ENCODE measurements at regions of chr19 and their contacts with region 1.

Region 1: DNA sequence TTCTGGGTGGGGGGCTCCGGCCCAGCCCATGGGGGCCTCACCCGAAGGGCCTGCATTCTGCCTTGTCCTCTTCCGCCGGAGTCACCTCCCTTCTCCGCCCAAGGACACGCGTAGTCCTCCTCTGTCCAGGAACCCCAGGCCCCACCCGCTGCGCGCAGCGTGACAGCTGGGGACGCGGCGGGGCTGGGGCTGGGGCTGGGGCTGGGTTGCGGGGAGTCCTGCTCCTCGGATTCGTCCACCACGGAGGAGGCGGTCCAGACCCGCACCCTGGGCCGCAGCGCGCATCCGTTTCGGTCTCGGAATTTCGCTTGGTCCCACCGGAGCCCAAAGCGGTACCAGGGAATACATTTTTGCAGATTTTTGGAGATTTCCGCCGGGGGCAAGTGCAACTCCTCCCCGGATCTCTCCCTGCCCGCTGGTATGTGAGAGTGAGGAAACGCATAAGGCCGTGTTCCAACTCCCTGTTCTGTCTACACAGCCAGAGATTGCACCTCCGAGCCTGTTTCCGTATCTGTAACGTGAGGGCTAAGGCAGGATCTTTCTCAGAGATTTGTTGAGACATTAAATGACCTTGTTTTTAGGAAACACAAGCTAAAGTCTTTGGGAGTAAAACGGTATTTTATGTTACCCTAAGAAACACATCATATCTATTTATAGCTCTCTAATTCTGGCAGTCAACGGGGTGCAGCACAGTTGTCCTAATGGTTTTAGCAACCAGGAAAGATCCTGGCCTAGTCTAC is at the start of gene COX7A1:
- DNase-seq: no peak
- H3K4me3 ChIP-seq: peak within 1 kb of the TSS; percentile 21 to 47 (median 38); a peak in 7 of 8 replicates
- H3K27ac ChIP-seq: no peak within 1 kb of the TSS
- H3K4me1 ChIP-seq: peaks cover 0 to 5% (median 0%) of the 10 kb centered on the region in 4 experiments; a peak in 1 of 7 replicates
- H3K27me3 ChIP-seq: no peaks in the 10 kb centered on the region
- CTCF ChIP-seq: no peak
- EP300 ChIP-seq: no peak
- POLR2A ChIP-seq: no peak
- RAD21 ChIP-seq: no peak
- total RNA-seq, gene COX7A1: 0.60 and 0.75 TPM in 2 replicates

Region 2: DNA sequence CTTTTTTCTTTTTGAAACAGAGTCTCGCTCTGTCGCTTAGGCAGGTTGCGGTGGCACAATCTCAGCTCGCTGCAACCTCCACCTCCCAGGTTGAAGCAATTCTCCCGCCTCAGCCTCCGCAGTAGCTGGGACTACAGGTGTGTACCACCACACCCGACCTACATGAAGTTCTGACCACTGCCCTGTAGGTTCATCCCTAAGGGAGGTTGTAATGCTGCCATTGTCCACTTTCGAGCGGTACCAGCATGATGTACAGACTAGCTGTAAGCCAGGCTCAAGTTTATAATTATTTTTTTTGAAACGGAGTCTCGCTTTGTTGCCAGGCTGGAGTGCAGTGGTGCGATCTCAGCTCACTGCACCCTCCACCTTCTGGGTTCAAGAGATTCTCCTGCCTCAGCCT is 11.3 kb after region 1 on chr19:
- CTCF ChIA-PET with region 1: interaction called, 4 read pairs
- POLR2A ChIA-PET with region 1: interaction called, 29 read pairs
- DNase-seq: no peak
- H3K4me3 ChIP-seq: no peak overlapping the region
- H3K27ac ChIP-seq: no peak overlapping the region
- H3K4me1 ChIP-seq: peaks cover 0 to 8% (median 4%) of the 10 kb centered on the region in 4 experiments; a peak in 3 of 7 replicates
- H3K27me3 ChIP-seq: no peaks in the 10 kb centered on the region
- CTCF ChIP-seq: no peak
- EP300 ChIP-seq: no peak
- POLR2A ChIP-seq: no peak
- RAD21 ChIP-seq: no peak

Measured in H1 (cell line).